ENCODE measurements at regions of chr17 and their contacts with region 1.

Region 1: DNA sequence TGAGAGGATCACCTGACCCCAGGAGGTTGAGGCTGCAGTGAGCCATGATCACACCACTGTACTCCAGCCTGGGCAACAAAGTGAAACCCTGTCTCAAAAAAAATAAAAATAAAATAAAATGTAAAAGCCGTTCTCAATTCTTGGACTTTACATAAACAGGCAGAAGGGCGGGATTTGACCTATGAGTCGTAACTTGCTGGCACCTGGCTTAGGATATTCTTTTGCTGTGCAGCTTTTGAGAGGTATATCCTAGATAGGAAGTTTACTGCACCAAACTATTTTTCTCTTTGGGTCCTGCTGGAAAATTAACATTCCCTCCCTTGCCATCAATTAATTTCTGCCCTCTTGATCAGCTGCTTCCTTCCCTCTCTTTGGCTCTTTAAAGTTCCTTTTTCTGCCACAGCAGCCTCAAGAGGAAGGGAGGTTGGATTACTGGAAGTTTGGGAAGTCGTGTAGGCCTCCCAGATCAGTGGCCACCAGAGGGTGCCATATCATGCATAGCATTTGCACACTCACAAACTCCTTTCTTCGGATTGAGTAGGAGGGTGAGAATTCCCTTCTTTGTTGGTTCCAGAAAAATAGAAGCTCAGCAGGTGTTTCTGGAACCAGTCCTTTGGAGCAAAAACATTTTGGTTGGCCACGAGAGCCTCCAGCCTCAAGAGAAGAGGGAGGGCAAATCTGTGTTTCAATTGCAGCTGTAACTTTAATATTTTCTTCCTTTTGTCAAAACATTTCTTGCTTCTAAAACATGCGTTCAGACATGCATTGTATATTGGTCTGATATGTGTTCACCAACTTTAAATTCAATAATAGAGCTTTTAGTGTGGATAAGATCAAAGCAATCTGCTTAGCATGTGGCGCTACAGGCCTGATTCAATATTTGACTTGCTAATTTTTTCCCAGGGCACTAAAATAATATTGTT is 147.3 kb downstream of the CCDC182 start:
- DNase-seq: peak; percentile 74
- H3K4me3 ChIP-seq: no peak overlapping the region
- H3K27ac ChIP-seq: no peak overlapping the region
- H3K4me1 ChIP-seq: no peaks in the 10 kb centered on the region
- H3K27me3 ChIP-seq: no peaks in the 10 kb centered on the region
- CTCF ChIP-seq: peak; percentile 58 to 67 (median 67)
- POLR2A ChIP-seq: no peak

Region 2: DNA sequence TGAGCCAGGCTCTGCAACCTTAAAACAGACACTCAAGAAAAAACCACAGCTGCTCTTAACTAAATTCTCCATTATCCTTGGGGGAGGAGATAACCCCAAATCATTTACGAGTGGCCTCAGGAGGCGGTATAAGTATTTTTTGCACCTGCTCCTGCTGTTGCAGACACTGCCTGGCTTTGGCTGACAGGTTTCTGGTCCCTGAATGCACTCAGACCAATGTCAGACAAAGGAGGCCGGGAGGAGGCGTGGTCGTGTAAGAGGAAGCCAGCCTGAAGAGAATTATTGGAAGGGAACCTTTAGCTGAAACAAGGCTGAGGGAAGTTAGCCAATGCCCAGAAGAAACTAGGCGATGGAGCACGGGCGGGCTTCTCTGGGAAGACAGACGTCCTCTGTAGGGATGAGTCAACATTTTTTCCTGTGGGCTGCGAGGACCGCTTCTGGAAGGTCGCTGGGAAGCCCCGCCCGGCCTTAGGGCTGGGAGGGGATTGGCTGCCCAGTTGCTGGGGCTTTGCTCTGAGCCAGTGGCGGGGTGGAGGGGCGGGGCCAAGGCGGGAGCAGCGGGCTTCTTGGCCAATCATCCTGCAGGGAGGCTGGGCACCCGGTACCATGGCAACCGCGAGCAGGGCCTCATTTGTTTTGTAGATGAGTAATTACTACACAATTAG is 65.0 kb after region 1 on chr17:
- intact Hi-C with region 1: no loop called
- DNase-seq: peak; percentile 94
- H3K4me3 ChIP-seq: peak overlapping the region; percentile 36 to 47
- H3K27ac ChIP-seq: peak overlapping the region in 1 of 2 donors; percentile 46
- H3K4me1 ChIP-seq: peaks cover 13% of the 10 kb centered on the region
- H3K27me3 ChIP-seq: no peaks in the 10 kb centered on the region
- CTCF ChIP-seq: no peak
- POLR2A ChIP-seq: no peak

Region 3: GRCh38 chr17:57747221-57748017 is 149.6 kb after region 1 on chr17:
- intact Hi-C with region 1: loop called (anchors 10 kb)
- DNase-seq: peak; percentile 49
- H3K4me3 ChIP-seq: no peak overlapping the region
- H3K27ac ChIP-seq: no peak overlapping the region
- H3K4me1 ChIP-seq: peaks cover 12% of the 10 kb centered on the region
- H3K27me3 ChIP-seq: no peaks in the 10 kb centered on the region
- CTCF ChIP-seq: peak; percentile 31 to 65 (median 63)
- POLR2A ChIP-seq: no peak

Measured in testis (tissue), 5 donors.